Heart right ventricle (tissue), 16 donors: ENCODE measurements at regions of chr12 and their contacts with region 1.

Region 1: GRCh38 chr12:42129595-42130204 is 15.0 kb downstream of the GXYLT1 start:
- DNase-seq: peak in 1 of 2 donors; percentile 45
- ATAC-seq: peak; percentile 54 to 84 (median 75)
- H3K4me3 ChIP-seq: no peak overlapping the region
- H3K27ac ChIP-seq: no peak overlapping the region
- H3K4me1 ChIP-seq: peaks cover 4 to 32% (median 20%) of the 10 kb centered on the region in 9 donors
- H3K27me3 ChIP-seq: no peaks in the 10 kb centered on the region
- CTCF ChIP-seq: peak; percentile 69 to 93 (median 83)

Region 2: GRCh38 chr12:42325653-42326474 is 196.2 kb after region 1 on chr12 and contains the starts of genes PPHLN1 and ZCRB1:
- intact Hi-C with region 1: loop called in 4 of 10 experiments (anchors 2 to 5 kb)
- DNase-seq: peak; percentile 79 to 81
- ATAC-seq: peak; percentile 96 to 99 (median 98)
- H3K4me3 ChIP-seq: peak within 1 kb of the TSS; percentile 60 to 94 (median 74)
- H3K27ac ChIP-seq: peak within 1 kb of the TSS; percentile 23 to 93 (median 80)
- H3K4me1 ChIP-seq: peaks cover 3 to 38% (median 22%) of the 10 kb centered on the region in 9 donors
- H3K27me3 ChIP-seq: no peaks in the 10 kb centered on the region
- CTCF ChIP-seq: no peak
- total RNA-seq, gene PPHLN1: 28.2 to 41.8 (median 34.8) TPM
- total RNA-seq, gene ZCRB1: 51.0 to 69.6 (median 58.6) TPM

Region 3: DNA sequence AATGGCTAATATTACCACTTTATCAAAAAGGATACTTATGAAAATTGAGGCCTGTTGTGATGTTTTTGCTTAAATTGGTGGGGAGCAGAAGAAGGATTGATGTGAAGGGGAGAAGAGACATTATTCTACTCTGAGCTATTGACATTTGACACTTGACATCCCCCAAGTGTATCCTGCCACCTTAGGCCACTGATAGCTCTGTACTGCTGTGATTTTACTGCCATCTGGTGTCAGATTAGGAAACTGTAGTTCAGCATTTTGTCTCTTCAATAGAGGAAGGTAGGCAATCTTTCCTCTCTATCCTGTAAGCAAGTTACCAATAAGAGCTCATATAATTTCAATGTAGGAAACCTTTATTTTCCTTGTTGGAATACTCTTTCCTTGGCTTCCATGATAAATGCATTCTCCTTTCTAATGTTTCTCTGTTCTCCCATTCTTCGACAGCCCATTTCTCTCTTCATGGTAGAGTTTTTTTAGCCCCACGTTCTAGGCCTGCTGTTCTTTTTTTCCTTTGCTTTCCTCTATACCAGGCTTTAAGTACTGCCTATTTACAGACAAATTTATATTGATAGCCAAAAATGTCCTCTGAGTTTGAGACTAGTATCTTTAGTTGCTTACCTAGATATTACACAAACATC is 242.6 kb after region 1 on chr12:
- intact Hi-C with region 1: loop called in 3 of 10 experiments (anchors 2 to 5 kb)
- DNase-seq: peak in 1 of 2 donors; percentile 21
- ATAC-seq: peak in 5 of 8 donors; percentile 51 to 77 (median 68)
- H3K4me3 ChIP-seq: no peak overlapping the region
- H3K27ac ChIP-seq: no peak overlapping the region
- H3K4me1 ChIP-seq: no peaks in the 10 kb centered on the region
- H3K27me3 ChIP-seq: no peaks in the 10 kb centered on the region
- CTCF ChIP-seq: peak; percentile 41 to 86 (median 73)

Region 4: GRCh38 chr12:42568952-42569915 is 439.5 kb after region 1 on chr12:
- intact Hi-C with region 1: loop called in 4 of 10 experiments (anchors 10 kb)
- DNase-seq: peak in 1 of 2 donors; percentile 46
- ATAC-seq: peak in 7 of 8 donors; percentile 29 to 73 (median 64)
- H3K4me3 ChIP-seq: no peak overlapping the region
- H3K27ac ChIP-seq: peak overlapping the region in 1 of 10 donors; percentile 9
- H3K4me1 ChIP-seq: peaks cover 0 to 53% (median 18%) of the 10 kb centered on the region in 9 donors
- H3K27me3 ChIP-seq: no peaks in the 10 kb centered on the region
- CTCF ChIP-seq: peak; percentile 38 to 78 (median 62)

Region 5: DNA sequence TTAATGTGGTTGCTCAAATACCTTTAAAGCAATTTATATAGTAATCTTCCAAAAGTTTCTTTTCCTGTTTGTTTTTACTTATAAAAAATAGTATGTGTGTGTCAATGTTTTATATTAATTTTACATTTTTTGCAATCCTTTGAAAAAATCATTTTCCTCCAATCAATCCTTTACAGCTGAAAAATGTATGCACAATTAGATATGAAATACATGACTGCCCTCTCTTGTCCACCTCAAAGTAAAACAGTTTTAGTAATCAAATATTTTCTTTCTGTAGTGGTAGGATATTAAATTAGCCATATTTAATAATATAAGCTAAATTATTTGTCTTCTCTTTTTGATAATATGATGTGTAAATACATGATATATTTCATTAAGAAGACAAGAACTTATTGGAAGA is 1152.4 kb after region 1 on chr12:
- intact Hi-C with region 1: loop called in 1 of 10 experiments (anchors 10 kb)
- DNase-seq: no peak
- ATAC-seq: peak in 2 of 8 donors; percentile 44 to 61
- H3K4me3 ChIP-seq: no peak overlapping the region
- H3K27ac ChIP-seq: no peak overlapping the region
- H3K4me1 ChIP-seq: peaks cover 0 to 24% (median 4%) of the 10 kb centered on the region in 9 donors
- H3K27me3 ChIP-seq: no peaks in the 10 kb centered on the region
- CTCF ChIP-seq: peak in 7 of 9 donors; percentile 16 to 67 (median 61)

Region 6: GRCh38 chr12:43349863-43350262 is 1220.2 kb after region 1 on chr12:
- intact Hi-C with region 1: loop called in 1 of 10 experiments (anchors 10 kb)
- DNase-seq: no peak
- ATAC-seq: no peak
- H3K4me3 ChIP-seq: no peak overlapping the region
- H3K27ac ChIP-seq: no peak overlapping the region
- H3K4me1 ChIP-seq: no peaks in the 10 kb centered on the region
- H3K27me3 ChIP-seq: peaks cover 0 to 5% (median 0%) of the 10 kb centered on the region in 7 donors
- CTCF ChIP-seq: peak in 2 of 9 donors; percentile 14 to 17